B cell (primary cell): ENCODE measurements at regions of chr2 and their contacts with region 1.

Region 1: DNA sequence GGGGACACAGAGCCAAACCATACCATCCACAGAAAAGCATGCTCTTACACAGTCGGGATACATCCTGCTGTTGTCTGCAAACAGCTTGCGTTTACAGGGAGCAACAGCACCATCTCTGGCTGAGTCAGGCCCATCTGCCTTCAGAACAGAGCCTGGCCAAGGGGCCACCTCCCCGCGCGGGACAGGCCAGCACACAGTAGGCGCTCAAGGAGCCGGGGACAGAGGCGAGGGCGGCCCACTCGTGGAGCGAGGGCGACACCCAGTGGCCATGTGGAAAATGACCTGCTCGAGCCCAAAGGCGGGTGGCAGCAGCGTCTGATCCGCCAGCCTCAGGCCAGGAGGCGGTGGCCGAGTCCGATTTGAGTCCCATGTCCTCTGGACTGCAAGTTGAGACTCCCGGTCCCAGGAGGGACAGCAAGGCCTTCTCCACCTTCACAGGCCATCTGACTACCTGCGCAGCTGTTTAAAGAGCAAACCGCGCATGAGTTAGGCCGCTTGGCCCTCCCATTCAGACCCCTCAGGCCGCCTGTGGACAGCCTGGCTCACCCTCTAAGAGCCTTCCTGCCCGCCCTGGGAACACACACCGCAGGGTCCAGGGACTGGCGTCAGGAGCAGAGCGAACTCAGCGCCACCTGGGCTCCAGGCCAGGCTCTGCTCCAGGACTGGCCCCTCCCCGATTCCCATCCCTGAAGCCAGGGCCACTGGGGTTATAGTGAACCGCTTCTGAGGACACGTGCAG is 38.3 kb downstream of the TTC32 start:
- DNase-seq: peak; percentile 77
- ATAC-seq: peak; percentile 87
- H3K4me3 ChIP-seq: no peak overlapping the region
- H3K4me3 Mint-ChIP-seq: no peak overlapping the region
- H3K27ac ChIP-seq: no peak overlapping the region
- H3K27ac Mint-ChIP-seq: no peak overlapping the region
- H3K4me1 ChIP-seq: peaks cover 10 to 13% of the 10 kb centered on the region in 2 donors
- H3K4me1 Mint-ChIP-seq: peaks cover 10% of the 10 kb centered on the region
- H3K27me3 ChIP-seq: peaks cover 0 to 8% (median 0%) of the 10 kb centered on the region in 4 experiments
- H3K27me3 Mint-ChIP-seq: peaks cover 4% of the 10 kb centered on the region
- CTCF ChIP-seq: peak; percentile 99

Region 2: DNA sequence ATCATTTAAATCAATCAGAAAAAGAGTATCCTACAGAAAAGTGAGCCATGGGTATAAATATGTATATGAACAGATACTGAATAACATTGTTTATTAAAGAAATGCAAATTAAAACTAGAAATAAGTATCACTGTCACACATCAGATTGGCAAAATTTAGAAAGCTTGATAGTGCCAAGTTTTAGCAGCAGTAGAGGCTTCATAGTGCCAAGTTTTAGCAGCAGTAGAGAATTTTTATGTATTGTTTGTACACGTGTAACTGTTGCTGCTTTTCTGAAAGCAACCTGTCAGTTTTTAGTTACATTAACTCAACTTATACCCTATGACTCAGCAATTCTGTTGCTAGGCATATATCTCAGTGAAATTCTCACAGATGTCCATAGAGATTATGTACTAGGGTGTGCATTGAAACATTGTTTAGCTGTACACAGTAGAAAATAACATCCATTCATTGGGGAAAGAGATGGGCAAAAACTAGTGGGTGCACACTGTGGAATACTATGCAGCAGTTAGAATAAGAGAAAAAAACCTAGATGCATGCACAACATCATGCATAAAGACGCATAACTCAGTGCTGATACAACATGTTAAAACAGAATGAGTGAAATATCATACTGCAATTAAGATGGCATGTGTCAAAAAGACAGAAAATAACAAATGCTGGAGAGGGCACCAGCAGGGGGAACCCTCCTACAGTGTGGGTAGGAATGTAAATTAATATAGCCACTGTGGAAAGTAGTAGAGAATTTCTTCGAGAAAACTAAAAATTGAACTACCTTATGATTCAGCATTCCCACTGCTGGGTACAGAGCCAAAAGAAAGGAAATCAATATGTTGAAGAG is 979.6 kb before region 1 on chr2:
- CTCF ChIA-PET with region 1: no interaction called
- POLR2A ChIA-PET with region 1: no interaction called
- intact Hi-C with region 1: loop called (anchors 5 kb)
- DNase-seq: no peak
- ATAC-seq: no peak
- H3K4me3 ChIP-seq: no peak overlapping the region
- H3K4me3 Mint-ChIP-seq: no peak overlapping the region
- H3K27ac ChIP-seq: no peak overlapping the region
- H3K27ac Mint-ChIP-seq: no peak overlapping the region
- H3K4me1 ChIP-seq: no peaks in the 10 kb centered on the region
- H3K4me1 Mint-ChIP-seq: no peaks in the 10 kb centered on the region
- H3K27me3 ChIP-seq: no peaks in the 10 kb centered on the region
- H3K27me3 Mint-ChIP-seq: no peaks in the 10 kb centered on the region
- CTCF ChIP-seq: no peak

Region 3: GRCh38 chr2:19876751-19877150 is 13.3 kb after region 1 on chr2:
- CTCF ChIA-PET with region 1: interaction called, 30 read pairs
- POLR2A ChIA-PET with region 1: no interaction called
- intact Hi-C with region 1: no loop called
- DNase-seq: no peak
- ATAC-seq: no peak
- H3K4me3 ChIP-seq: no peak overlapping the region
- H3K4me3 Mint-ChIP-seq: no peak overlapping the region
- H3K27ac ChIP-seq: no peak overlapping the region
- H3K27ac Mint-ChIP-seq: no peak overlapping the region
- H3K4me1 ChIP-seq: no peaks in the 10 kb centered on the region
- H3K4me1 Mint-ChIP-seq: no peaks in the 10 kb centered on the region
- H3K27me3 ChIP-seq: no peaks in the 10 kb centered on the region
- H3K27me3 Mint-ChIP-seq: no peaks in the 10 kb centered on the region
- CTCF ChIP-seq: no peak